AG04449 (cell line): ENCODE measurements at regions of chr3 and their contacts with region 1.

Region 1: DNA sequence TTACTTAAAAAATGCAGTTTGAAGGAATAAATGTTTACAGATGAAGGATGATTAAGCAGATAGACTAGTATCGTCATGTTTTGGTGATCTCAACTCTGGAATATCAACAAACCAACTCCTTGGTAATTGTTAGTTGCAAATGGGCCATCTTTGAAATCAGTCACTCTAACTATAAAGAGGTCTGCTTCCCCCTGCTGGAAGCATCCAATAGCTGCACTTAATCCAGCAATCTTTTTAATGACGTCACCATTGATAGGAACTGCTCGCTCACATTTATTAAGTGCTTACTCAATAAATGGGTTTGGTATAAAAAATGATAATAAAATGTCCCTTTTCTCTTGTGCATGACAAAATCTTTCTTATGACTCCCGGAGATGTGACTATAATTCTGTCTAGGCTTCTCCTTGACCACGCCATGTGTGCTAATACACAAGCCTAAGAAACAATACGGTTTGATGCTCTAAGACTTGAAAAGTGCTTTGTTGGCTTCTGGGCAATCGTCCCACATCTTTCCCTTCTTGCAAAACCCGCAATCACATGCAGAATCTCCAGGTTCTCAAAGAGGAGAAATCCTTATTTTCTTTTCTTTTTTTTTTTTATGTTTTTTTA is 227.6 kb upstream of the POU1F1 start:
- DNase-seq: peak; percentile 50
- H3K4me3 ChIP-seq: no peak overlapping the region
- CTCF ChIP-seq: peak; percentile 59

Region 2: GRCh38 chr3:87287011-87287410 is 217.0 kb before region 1 on chr3:
- CTCF ChIA-PET with region 1: interaction called, 16 read pairs
- POLR2A ChIA-PET with region 1: no interaction called
- DNase-seq: peak; percentile 23
- H3K4me3 ChIP-seq: no peak overlapping the region
- CTCF ChIP-seq: no peak

Region 3: DNA sequence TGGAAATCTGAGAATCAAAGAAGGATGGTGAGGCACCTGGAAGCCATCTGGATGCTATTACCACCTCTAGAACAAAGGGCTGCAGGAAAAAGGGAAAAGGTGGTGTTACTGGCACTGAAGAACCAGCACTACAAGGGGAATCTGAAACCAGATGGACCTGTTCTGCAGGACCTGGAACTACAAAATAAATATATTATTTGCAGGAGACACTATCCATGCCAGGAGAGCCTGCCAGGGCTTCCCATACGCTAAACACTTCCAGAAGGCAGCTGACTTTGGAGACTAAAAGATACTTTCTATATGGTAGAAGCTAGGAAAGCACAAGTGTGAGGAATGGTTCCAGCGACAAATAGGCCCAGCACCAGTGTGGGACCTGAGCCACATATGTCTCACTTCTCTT is 144.2 kb before region 1 on chr3:
- CTCF ChIA-PET with region 1: interaction called, 56 read pairs
- POLR2A ChIA-PET with region 1: no interaction called
- DNase-seq: no peak
- H3K4me3 ChIP-seq: no peak overlapping the region
- CTCF ChIP-seq: no peak

Region 4: GRCh38 chr3:87397210-87397609 is 106.8 kb before region 1 on chr3:
- CTCF ChIA-PET with region 1: no interaction called
- POLR2A ChIA-PET with region 1: no interaction called
- DNase-seq: peak; percentile 46
- H3K4me3 ChIP-seq: no peak overlapping the region
- CTCF ChIP-seq: no peak

Region 5: DNA sequence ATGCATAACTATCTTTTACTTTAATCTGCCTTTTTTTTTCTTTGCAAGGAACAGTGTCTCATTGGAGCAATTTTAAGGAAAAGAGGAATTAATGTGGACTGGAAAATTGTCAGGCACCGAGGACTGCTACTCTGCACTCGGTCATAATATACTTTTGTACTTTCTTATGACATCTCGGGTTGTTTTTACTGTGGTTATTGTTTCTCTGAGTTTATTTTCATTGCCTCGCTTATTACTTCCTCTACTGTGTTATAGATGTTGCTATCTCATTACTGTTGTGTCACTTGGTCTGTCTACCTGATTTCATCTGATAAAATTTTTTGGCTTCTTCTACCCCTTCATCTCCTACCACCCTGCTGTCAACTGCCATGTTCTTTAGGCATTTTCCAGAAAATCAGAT is 14.1 kb before region 1 on chr3:
- CTCF ChIA-PET with region 1: no interaction called
- POLR2A ChIA-PET with region 1: no interaction called
- DNase-seq: no peak
- H3K4me3 ChIP-seq: no peak overlapping the region
- CTCF ChIP-seq: no peak